WTC11 (cell line): ENCODE measurements at regions of chr10 and their contacts with region 1.

Region 1: DNA sequence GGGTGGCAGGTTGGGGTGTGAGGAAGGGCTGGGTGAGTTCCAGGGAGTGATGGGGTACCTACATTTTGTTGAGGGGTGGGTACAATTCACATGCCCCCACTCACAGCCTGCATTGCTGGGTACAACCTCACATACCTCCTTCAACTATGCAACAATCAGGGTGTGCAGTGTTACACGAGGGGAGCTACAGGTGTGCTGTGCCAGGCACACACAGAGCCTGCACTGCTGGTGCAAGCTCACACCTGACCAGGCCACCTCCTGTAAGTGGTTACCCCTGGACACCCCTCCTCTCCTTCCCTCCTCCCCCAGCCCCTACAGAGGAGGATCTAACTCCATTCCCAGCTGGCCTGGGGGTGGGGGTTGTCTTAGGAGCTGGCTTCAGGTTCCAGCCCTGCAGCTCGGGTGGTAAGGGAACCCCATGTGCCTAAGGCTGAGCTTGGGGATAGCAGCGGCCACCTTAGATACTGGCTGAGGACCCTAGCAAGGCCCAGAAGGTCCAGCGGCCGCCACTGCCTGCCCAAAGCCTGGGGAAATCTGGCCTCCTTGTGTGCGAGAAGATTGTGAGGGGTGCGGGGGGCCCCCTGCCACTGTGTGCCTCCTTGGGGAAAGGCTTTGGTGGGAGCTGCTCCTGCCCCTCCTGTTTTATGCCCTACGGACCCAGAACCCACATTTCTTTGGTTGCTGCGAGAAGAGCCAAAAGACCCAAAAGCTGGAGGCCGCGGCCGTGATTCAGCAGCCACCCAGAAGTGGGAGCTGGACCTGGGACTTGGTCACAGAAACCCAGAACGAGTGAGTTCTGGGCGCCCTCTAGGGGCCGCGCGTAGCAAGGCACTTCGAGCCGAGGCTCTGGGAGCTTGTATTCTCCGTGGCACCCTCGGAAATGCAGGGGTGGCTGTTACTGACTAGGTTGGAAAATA is 10.8 kb downstream of the TLX1 start:
- DNase-seq: peak; percentile 91
- ATAC-seq: peak; percentile 49
- H3K4me3 Mint-ChIP-seq: no peak overlapping the region; the same call in 1 of the 2 replicates
- H3K27ac Mint-ChIP-seq: no peak overlapping the region
- H3K4me1 Mint-ChIP-seq: peaks cover 24% of the 10 kb centered on the region
- H3K27me3 Mint-ChIP-seq: peaks cover 100% of the 10 kb centered on the region
- CTCF ChIP-seq: peak; percentile 95

Region 2: GRCh38 chr10:100817268-100817839 is 324.5 kb before region 1 on chr10:
- CTCF ChIA-PET with region 1: no interaction called
- POLR2A ChIA-PET with region 1: no interaction called
- DNase-seq: peak; percentile 72
- ATAC-seq: peak; percentile 97
- H3K4me3 Mint-ChIP-seq: no peak overlapping the region
- H3K27ac Mint-ChIP-seq: no peak overlapping the region
- H3K4me1 Mint-ChIP-seq: peaks cover 24% of the 10 kb centered on the region
- H3K27me3 Mint-ChIP-seq: peaks cover 32% of the 10 kb centered on the region
- CTCF ChIP-seq: 0 out of 2 replicates have a peak, but pooled peaks have one; percentile 18

Region 3: GRCh38 chr10:101018600-101019439 is 123.1 kb before region 1 on chr10:
- CTCF ChIA-PET with region 1: interaction called, 23 read pairs
- POLR2A ChIA-PET with region 1: no interaction called
- DNase-seq: peak; percentile 95
- ATAC-seq: peak; percentile 77
- H3K4me3 Mint-ChIP-seq: peak overlapping the region; percentile 73
- H3K27ac Mint-ChIP-seq: no peak overlapping the region
- H3K4me1 Mint-ChIP-seq: peaks cover 15% of the 10 kb centered on the region
- H3K27me3 Mint-ChIP-seq: peaks cover 64% of the 10 kb centered on the region
- CTCF ChIP-seq: peak; percentile 70

Region 4: DNA sequence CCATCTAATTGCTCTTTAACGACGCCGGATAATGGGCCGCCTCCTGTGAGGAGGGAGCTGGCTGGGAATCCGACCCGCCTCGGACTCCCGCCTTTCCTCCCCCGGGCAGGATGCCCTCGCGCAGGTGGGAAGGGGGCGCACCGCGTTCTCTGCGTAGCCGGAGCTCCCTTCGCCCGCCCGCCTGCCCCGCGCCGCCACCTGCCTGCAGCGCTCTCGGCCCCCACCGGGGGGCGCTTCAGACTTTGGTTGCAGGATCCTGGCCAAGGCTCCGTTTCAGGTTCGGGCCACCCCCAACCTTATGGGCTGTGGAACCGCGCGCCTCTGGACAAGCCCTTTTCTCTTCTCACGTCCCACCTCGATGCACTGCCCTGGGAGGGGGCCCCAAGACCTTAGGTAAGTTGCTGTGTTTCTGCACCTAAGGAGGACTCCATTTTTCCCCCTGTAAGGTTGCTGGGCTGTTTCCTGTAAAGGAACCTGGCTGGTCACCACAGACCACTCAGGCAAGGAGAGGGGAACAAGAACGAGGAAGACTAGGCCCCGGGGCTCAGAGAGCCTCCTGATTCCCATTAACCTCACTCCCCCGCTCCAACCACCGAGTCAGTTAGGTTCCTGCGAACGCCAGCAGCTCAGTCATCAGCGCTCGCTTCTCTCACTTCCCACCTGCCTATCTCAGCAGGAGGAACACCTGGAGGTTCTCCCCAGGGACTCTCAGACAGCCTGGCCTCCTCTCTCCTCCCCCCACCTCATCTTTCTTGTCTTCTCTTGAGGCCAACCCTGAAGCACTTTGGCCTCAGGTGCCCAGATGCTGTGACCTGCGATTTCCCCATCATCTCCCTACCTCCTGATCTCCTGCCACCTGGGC is 91.4 kb before region 1 on chr10:
- CTCF ChIA-PET with region 1: interaction called, 181 read pairs
- POLR2A ChIA-PET with region 1: no interaction called
- DNase-seq: peak; percentile 95
- ATAC-seq: peak; percentile 68
- H3K4me3 Mint-ChIP-seq: peak overlapping the region; percentile 60
- H3K27ac Mint-ChIP-seq: no peak overlapping the region
- H3K4me1 Mint-ChIP-seq: peaks cover 41% of the 10 kb centered on the region
- H3K27me3 Mint-ChIP-seq: peaks cover 67% of the 10 kb centered on the region
- CTCF ChIP-seq: peak; percentile 86

Region 5: GRCh38 chr10:101075775-101076174 is 66.1 kb before region 1 on chr10:
- CTCF ChIA-PET with region 1: interaction called, 37 read pairs
- POLR2A ChIA-PET with region 1: no interaction called
- DNase-seq: no peak
- ATAC-seq: no peak
- H3K4me3 Mint-ChIP-seq: no peak overlapping the region
- H3K27ac Mint-ChIP-seq: no peak overlapping the region
- H3K4me1 Mint-ChIP-seq: peaks cover 41% of the 10 kb centered on the region
- H3K27me3 Mint-ChIP-seq: peaks cover 79% of the 10 kb centered on the region
- CTCF ChIP-seq: no peak

Region 6: DNA sequence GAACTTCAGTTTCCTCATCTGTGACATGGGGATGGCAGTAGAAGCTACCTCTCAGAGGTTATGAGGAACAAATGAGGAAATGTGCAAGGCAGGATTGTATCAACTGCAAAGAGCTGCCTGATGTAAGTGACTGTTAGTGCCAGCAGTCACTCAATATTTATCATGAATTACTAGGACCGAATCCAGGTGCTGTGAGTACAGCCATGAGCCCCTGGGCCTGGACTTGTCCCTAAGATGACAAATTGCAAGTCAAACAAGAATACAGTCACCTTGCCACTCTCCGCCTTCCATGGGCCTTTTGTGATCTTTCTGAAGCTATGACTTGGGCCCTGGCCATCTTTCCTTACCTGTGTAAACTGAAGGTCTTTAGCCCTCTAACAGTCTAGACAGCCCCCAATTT is 38.4 kb before region 1 on chr10:
- CTCF ChIA-PET with region 1: interaction called, 509 read pairs
- POLR2A ChIA-PET with region 1: no interaction called
- DNase-seq: no peak
- ATAC-seq: no peak
- H3K4me3 Mint-ChIP-seq: no peak overlapping the region
- H3K27ac Mint-ChIP-seq: no peak overlapping the region
- H3K4me1 Mint-ChIP-seq: no peaks in the 10 kb centered on the region
- H3K27me3 Mint-ChIP-seq: peaks cover 18% of the 10 kb centered on the region
- CTCF ChIP-seq: no peak

Region 7: GRCh38 chr10:101130984-101131961 is 10.6 kb before region 1 on chr10 and contains the start of gene TLX1:
- CTCF ChIA-PET with region 1: interaction called, 73 read pairs
- POLR2A ChIA-PET with region 1: no interaction called
- DNase-seq: peak; percentile 74
- ATAC-seq: peak; percentile 46
- H3K4me3 Mint-ChIP-seq: peak within 1 kb of the TSS; percentile 59
- H3K27ac Mint-ChIP-seq: no peak within 1 kb of the TSS
- H3K4me1 Mint-ChIP-seq: peaks cover 39% of the 10 kb centered on the region
- H3K27me3 Mint-ChIP-seq: peaks cover 98% of the 10 kb centered on the region
- CTCF ChIP-seq: no peak
- total RNA-seq, gene TLX1: 2.1 to 4.6 TPM (median 2.3 TPM) in 3 replicates

Region 8: GRCh38 chr10:101238732-101239105 is 96.8 kb after region 1 on chr10:
- CTCF ChIA-PET with region 1: interaction called, 17 read pairs
- POLR2A ChIA-PET with region 1: no interaction called
- DNase-seq: peak; percentile 55
- ATAC-seq: peak; percentile 50
- H3K4me3 Mint-ChIP-seq: no peak overlapping the region
- H3K27ac Mint-ChIP-seq: no peak overlapping the region
- H3K4me1 Mint-ChIP-seq: peaks cover 25% of the 10 kb centered on the region
- H3K27me3 Mint-ChIP-seq: peaks cover 86% of the 10 kb centered on the region
- CTCF ChIP-seq: no peak